ENCODE measurements at regions of chr22 and their contacts with region 1.

Region 1: DNA sequence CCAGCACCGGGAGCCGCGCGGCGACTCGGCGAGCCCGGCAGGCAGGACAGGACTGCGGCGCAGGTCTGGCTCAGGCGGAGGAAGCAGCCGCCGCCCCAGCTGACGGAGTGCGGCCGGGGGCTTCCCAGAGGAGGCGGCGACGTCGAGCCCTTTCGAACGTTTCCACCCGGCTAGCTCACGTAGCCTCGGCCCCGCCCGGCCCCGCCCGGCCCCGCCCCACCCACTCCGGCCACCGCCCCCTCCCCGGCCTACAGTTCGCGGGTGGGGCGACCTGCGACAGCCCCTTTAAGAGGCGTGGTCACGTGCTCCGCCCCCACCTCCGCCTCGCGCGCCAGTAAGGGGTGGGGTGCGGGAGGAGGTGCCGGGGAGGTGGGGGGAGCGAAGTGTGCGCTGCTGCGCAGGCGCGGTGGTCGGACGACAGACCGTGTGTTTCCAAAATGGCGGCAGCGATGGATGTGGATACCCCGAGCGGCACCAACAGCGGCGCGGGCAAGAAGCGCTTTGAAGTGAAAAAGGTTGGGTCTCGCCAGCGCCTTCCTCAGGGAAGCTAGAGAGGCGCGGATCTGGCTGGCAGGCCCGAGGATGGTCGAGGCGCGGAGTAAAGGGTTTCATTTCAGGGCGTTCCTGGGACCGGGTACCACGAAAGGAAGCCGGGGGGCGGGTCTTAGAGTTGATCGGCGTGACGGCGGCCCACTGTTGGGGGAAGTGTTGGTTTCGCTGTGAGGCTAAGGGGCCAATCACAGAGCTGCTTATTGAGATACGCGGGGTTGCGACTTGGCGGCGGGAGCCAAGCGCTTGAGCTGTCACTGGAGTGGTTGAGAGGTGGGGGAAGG is at the start of gene RBX1:
- DNase-seq: peak; percentile 99
- ATAC-seq: peak; percentile 81
- H3K4me3 Mint-ChIP-seq: peak within 1 kb of the TSS; percentile 97
- H3K27ac Mint-ChIP-seq: peak within 1 kb of the TSS; percentile 98
- H3K4me1 Mint-ChIP-seq: peaks cover 26% of the 10 kb centered on the region
- H3K27me3 Mint-ChIP-seq: peaks cover 2% of the 10 kb centered on the region
- total RNA-seq, gene RBX1: 68.6 to 73.6 TPM

Region 2: DNA sequence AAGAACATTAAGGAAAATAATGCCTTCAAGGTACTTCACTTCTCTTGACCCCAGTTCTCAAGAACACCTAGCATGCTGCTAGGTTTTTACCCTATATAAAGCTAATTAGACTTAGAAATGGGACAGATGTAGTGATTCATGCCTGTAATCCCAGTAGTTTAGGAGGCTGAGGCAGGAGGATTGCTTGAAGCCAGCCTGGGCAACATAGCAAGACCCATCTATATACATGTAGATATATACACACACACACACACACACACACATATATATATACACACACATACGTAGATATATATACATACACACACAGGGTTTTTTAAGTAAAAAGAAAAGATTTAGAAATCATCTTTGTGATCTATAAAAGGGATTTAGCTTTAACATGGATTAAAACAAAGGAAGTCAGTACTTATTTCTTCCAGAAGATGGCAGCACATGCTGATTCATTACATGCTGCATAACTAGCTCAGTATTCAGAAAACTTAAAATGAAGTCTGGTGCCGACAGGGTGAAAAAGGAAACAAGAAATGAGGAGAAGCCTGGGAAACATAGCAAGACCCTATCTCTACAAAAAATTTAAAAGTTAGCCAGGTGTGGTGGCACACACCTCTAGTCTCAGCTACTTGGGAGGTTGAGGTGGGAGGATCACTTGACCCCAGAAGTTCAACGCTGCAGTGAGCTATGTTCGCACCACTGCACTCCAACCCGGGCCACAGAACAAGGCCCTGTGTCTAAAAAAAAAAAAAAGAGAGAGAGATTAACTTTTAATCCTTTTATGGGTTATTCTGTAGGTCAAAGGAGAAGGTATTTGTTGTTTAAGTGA is 28.5 kb before region 1 on chr22:
- POLR2A ChIA-PET with region 1: interaction called, 11 read pairs
- DNase-seq: no peak
- ATAC-seq: peak; percentile 81
- H3K4me3 Mint-ChIP-seq: peak overlapping the region; percentile 47
- H3K27ac Mint-ChIP-seq: peak overlapping the region; percentile 43
- H3K4me1 Mint-ChIP-seq: peaks cover 4% of the 10 kb centered on the region
- H3K27me3 Mint-ChIP-seq: no peaks in the 10 kb centered on the region

Region 3: GRCh38 chr22:41022470-41023298 is 71.5 kb after region 1 on chr22:
- POLR2A ChIA-PET with region 1: interaction called, 60 read pairs
- DNase-seq: peak; percentile 87
- ATAC-seq: peak; percentile 68
- H3K4me3 Mint-ChIP-seq: peak overlapping the region; percentile 82
- H3K27ac Mint-ChIP-seq: peak overlapping the region; percentile 79
- H3K4me1 Mint-ChIP-seq: peaks cover 11% of the 10 kb centered on the region
- H3K27me3 Mint-ChIP-seq: peaks cover 15% of the 10 kb centered on the region

Region 4: DNA sequence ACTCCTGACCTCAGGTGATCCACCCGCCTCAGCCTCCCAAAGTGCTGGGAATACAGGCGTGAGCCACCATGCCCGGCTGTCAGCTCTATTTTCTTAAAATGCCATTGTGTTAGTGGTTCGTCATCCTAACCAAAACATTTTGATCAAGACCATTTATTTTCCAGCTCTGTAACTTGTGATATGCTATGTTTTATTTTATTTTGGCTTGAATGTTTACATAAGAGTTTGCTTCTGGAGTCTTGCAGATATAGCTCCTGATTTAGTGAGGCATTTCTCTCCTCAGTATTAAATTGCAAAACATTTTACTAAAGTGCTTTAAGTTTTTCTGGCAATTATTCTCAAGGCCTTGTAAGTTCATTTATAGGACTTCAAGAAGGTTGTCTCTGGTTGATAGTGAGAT is 145.7 kb after region 1 on chr22:
- POLR2A ChIA-PET with region 1: interaction called, 118 read pairs
- DNase-seq: no peak
- ATAC-seq: no peak
- H3K4me3 Mint-ChIP-seq: no peak overlapping the region
- H3K27ac Mint-ChIP-seq: no peak overlapping the region
- H3K4me1 Mint-ChIP-seq: peaks cover 30% of the 10 kb centered on the region
- H3K27me3 Mint-ChIP-seq: no peaks in the 10 kb centered on the region

Region 5: DNA sequence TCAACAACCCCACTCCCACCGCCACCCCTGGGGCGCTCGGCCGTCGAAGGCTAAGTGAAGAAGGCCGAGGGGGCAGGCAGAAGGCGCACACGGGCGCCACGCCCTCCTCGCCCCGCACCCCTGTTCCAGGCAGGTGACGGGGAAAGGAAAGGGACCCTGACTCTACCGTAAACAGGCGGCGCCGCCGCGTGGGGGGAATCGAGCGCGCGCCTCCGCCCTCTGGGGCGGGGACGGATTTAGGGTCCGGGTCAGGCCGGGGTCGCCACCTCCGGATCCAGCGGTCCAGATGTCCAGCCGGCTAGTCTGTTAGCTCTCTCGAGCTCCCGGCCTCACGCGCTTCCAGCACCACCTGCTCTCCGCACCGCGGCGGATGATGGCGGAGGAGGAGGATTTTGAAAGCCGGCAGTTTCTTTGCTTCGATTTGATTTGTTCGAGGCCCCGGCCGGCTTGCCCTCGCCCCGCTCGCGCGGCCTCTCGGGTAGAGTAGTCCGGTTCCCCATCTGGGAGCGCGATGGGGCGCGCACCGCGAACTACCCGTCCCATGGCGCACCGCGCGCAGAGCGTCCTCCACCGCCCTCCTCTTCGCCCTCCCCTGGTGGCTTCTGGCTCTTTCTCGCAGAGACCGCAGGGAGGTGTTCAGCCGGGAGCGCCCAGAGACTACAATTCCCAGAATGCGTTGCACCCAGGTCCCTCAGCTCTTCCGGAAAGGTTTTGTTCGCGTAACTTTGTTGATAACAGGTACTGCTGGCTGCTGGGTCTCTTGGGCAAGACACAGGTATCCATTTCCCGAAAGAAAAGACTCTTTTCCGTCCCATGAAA is 334.9 kb after region 1 on chr22 and contains the start of gene RANGAP1:
- POLR2A ChIA-PET with region 1: interaction called, 11 read pairs
- DNase-seq: peak; percentile 96
- ATAC-seq: peak; percentile 96
- H3K4me3 Mint-ChIP-seq: peak within 1 kb of the TSS; percentile 95
- H3K27ac Mint-ChIP-seq: peak within 1 kb of the TSS; percentile 96
- H3K4me1 Mint-ChIP-seq: peaks cover 18% of the 10 kb centered on the region
- H3K27me3 Mint-ChIP-seq: no peaks in the 10 kb centered on the region
- total RNA-seq, gene RANGAP1: 93.6 to 98.3 TPM

Measured in activated naive CD8-positive, alpha-beta T cell treated with anti-CD3 and anti-CD28 coated beads, Interleukin-2, amount 10 ng/mL, durations not matched to agents 7 days and 5 days (primary cell).